ENCODE measurements at regions of chr6 and their contacts with region 1.

Region 1: GRCh38 chr6:43269273-43270007 is 26.2 kb downstream of the TTBK1 start:
- DNase-seq: peak in 3 of 5 donors; percentile 50 to 74 (median 60)
- ATAC-seq: peak in 3 of 4 donors; percentile 20 to 52 (median 26)
- H3K4me3 ChIP-seq: peak overlapping the region in 10 of 12 donors; percentile 24 to 51 (median 34)
- H3K27ac ChIP-seq: peak overlapping the region in 11 of 12 donors; percentile 61 to 90 (median 74)
- H3K4me1 ChIP-seq: peaks cover 0 to 35% (median 24%) of the 10 kb centered on the region in 12 donors
- H3K27me3 ChIP-seq: peaks cover 0 to 25% (median 4%) of the 10 kb centered on the region in 9 donors
- CTCF ChIP-seq: no peak
- POLR2A ChIP-seq: no peak

Region 2: DNA sequence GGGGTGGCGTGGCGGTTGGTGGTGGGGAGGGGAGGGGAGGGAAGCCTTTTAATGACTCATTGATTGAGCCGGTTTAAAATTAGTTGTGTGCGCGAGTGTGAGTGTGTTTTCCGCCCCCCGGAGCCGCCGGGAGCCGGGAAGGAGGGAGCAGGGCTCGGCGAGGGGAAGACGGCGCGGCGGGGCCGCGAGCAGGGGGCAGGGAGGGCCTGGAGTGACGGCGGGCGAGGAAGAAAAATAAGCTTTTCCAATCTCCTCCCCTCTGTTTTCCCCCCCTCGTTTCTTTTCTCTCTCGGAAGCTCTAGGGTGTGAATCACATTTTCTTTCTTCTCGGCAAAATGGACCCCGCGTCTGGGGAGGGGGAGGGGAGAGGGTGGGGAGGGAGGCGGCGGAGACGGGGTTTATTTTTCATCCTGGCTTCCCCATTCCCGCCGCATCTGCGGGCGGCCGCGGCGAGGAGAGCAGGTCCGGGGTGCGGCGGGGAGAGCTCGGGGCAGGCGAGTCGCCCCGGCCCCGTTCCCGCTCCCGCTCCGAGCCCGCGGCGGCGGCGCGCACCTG is 486.7 kb before region 1 on chr6:
- intact Hi-C with region 1: no loop called
- DNase-seq: peak; percentile 82 to 89 (median 86)
- ATAC-seq: peak; percentile 47 to 82 (median 80)
- H3K4me3 ChIP-seq: peak overlapping the region; percentile 63 to 97 (median 90)
- H3K27ac ChIP-seq: peak overlapping the region; percentile 98 to 100 (median 100)
- H3K4me1 ChIP-seq: peaks cover 3 to 51% (median 29%) of the 10 kb centered on the region in 12 donors
- H3K27me3 ChIP-seq: no peaks in the 10 kb centered on the region
- CTCF ChIP-seq: no peak
- POLR2A ChIP-seq: peak in 1 of 2 donors; percentile 70

Region 3: DNA sequence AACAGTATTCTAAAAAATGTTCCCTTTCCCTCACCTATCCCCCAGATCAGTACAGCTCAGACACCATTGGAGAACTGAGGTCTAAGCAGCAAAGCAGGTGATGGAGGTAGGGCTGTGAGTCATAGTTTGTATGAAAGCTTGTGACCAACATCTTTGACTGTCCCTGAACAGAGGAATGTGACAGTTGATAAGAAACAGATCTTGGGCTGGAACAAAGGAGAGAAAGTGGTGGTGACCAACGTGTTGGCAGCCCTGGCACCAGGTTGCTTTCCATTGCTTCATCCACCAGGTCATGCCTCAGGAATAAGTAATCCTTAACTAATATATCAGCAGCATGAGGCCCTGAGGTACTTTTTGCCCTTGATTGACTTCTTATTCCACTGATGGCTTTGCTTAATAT is 59.1 kb after region 1 on chr6:
- intact Hi-C with region 1: loop called in 4 of 10 experiments (anchors 2 to 5 kb)
- DNase-seq: peak in 4 of 5 donors; percentile 52 to 83 (median 62)
- ATAC-seq: peak; percentile 95 to 98 (median 98)
- H3K4me3 ChIP-seq: no peak overlapping the region
- H3K27ac ChIP-seq: peak overlapping the region; percentile 29 to 94 (median 77)
- H3K4me1 ChIP-seq: peaks cover 0 to 12% (median 0%) of the 10 kb centered on the region in 12 donors
- H3K27me3 ChIP-seq: no peaks in the 10 kb centered on the region
- CTCF ChIP-seq: no peak
- POLR2A ChIP-seq: no peak

Region 4: DNA sequence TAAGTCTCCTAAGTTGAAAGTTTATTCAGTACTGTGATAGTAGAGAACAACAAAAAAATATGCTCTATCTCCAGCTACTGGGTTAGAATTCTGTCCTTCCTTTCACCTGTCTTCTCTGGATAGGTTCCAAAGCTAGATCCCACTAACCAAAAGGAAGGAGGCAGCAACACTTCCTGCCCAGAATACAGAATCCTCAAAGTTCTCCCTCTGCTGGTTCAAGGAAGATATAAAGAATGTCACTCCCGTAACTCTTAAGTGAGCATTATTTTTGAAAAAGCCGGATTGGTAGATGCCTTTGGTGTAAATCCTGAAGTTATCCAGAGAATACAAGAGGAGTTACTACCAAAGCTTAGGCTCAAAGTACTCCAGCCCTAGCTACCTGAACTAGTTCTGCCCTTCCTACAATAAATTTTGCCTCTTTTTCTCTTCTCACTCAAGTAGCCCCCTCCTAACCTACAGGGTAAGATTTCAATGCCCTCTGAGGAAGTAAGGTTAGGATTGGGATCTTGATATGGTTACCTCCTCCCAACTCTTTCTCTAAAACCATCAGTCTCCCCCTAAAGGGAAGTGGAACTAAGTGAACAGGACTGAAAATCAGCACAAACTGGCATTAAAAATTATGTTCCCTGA is 65.1 kb after region 1 on chr6:
- intact Hi-C with region 1: loop called in 6 of 10 experiments (anchors 2 to 5 kb)
- DNase-seq: no peak
- ATAC-seq: peak in 2 of 4 donors; percentile 53
- H3K4me3 ChIP-seq: no peak overlapping the region
- H3K27ac ChIP-seq: no peak overlapping the region
- H3K4me1 ChIP-seq: peaks cover 0 to 25% (median 6%) of the 10 kb centered on the region in 12 donors
- H3K27me3 ChIP-seq: no peaks in the 10 kb centered on the region
- CTCF ChIP-seq: peak; percentile 33 to 64 (median 48)
- POLR2A ChIP-seq: no peak

Region 5: GRCh38 chr6:43355862-43356590 is 86.6 kb after region 1 on chr6:
- intact Hi-C with region 1: loop called in 7 of 10 experiments (anchors 2 to 5 kb)
- DNase-seq: no peak
- ATAC-seq: peak; percentile 71 to 91 (median 90)
- H3K4me3 ChIP-seq: no peak overlapping the region
- H3K27ac ChIP-seq: no peak overlapping the region
- H3K4me1 ChIP-seq: no peaks in the 10 kb centered on the region
- H3K27me3 ChIP-seq: no peaks in the 10 kb centered on the region
- CTCF ChIP-seq: peak in 11 of 12 donors; percentile 9 to 61 (median 44)
- POLR2A ChIP-seq: no peak